Activated naive CD4-positive, alpha-beta T cell treated with anti-CD3 and anti-CD28 coated beads for 36 hours (primary cell): ENCODE measurements at regions of chr12 and their contacts with region 1.

Region 1: GRCh38 chr12:121209624-121210572 is at the start of gene P2RX4:
- DNase-seq: peak; percentile 91
- H3K4me3 Mint-ChIP-seq: peak within 1 kb of the TSS; percentile 81
- H3K27ac Mint-ChIP-seq: peak within 1 kb of the TSS; percentile 89
- H3K4me1 Mint-ChIP-seq: peaks cover 23% of the 10 kb centered on the region
- H3K27me3 Mint-ChIP-seq: no peaks in the 10 kb centered on the region
- total RNA-seq, gene P2RX4: 14.2 to 18.0 TPM

Region 2: DNA sequence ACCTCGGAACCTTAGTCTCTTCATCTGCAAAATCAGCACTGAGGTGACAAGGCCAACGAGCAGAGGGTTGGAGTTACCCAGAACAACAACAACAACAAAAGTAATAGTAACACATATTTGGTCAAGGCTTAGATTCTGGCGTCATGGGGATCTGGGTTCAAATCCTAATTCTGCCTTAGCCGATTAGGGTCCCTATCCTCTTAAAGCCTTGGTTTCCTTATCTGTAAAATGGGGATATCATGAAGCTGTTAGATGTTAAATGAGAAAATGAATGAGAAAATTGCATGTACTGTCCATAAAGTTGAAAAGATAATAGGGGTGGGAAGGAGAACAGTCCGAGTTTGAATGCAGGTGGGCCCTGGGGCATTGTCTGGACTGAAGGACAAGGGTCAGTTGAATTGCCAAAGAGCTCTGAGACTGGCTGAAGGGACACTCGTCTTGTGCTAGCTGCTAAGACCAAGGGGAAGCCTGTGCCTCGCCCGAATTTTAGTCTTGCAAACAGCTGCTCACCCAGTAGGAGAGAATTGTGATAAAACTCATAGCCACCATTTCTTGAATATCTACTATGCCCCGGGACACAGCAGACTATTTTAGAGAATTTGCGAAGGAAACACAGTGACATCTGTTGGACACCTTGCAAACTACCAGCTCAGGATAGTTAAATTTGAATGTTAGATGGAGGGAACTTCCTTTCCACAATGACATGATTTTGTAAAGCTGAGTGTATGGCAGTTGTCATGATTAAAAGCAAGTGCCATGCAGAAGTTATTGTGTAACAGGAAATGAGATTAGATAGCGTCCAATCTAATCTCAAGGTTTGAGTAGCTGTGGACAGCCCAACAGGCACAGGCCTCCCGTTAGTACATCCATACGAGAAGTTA is 238.4 kb before region 1 on chr12:
- CTCF ChIA-PET with region 1: no interaction called
- intact Hi-C with region 1: no loop called
- DNase-seq: peak; percentile 62
- H3K4me3 Mint-ChIP-seq: no peak overlapping the region
- H3K27ac Mint-ChIP-seq: no peak overlapping the region
- H3K4me1 Mint-ChIP-seq: peaks cover 4% of the 10 kb centered on the region
- H3K27me3 Mint-ChIP-seq: no peaks in the 10 kb centered on the region

Region 3: DNA sequence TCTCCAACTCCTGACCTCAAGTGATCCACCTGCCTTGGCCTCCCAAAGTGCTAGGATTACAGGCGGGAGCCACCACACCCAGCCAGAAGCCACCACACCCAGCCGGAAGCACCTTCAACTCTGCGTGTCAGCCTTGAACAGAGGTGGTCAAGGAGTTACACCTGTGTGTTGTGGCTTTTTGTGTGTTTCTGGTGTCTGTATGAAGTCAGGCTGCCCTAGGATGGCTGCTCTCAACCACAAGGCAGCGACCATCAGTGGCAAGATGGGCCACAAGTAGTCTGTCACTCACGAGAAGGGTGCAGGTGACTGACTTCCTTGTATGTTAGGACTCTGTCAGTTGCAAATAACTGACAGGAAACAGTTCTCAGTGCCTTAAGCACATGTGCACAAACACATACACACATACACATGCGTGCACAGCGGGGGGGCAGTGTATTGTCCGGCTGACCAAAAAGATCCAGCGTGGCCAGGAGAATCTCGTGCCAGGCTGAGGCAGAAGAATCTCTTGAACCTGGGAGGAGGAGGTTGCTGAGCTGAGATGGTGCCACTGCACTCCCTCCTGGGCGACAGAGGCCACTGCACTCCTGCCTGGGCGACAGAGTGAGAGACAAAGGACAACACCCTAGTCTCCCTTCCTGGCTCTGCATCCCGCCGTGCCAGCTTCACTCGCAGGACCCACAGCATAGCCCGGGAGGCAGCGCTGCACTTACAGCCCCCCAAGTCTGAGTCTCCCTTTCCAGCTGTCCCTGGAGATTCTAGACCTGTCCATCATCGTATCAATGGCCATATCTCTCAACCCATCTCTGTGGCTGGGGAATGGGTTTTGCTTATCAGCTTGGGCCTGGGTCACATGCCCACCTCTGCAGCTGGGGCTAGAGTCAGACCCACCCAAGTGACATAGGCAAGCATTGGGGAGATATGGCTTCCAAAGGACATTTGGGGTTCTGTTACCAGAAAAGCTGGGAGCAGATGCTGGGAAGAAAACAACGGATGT is 13.7 kb after region 1 on chr12:
- CTCF ChIA-PET with region 1: interaction called, 3 read pairs
- intact Hi-C with region 1: loop called (anchors 1 kb)
- DNase-seq: peak; percentile 67
- H3K4me3 Mint-ChIP-seq: no peak overlapping the region
- H3K27ac Mint-ChIP-seq: peak overlapping the region; percentile 62
- H3K4me1 Mint-ChIP-seq: peaks cover 42% of the 10 kb centered on the region
- H3K27me3 Mint-ChIP-seq: no peaks in the 10 kb centered on the region